Activated naive CD4-positive, alpha-beta T cell treated with anti-CD3 and anti-CD28 coated beads for 36 hours (primary cell): ENCODE measurements at regions of chr17 and their contacts with region 1.

Region 1: DNA sequence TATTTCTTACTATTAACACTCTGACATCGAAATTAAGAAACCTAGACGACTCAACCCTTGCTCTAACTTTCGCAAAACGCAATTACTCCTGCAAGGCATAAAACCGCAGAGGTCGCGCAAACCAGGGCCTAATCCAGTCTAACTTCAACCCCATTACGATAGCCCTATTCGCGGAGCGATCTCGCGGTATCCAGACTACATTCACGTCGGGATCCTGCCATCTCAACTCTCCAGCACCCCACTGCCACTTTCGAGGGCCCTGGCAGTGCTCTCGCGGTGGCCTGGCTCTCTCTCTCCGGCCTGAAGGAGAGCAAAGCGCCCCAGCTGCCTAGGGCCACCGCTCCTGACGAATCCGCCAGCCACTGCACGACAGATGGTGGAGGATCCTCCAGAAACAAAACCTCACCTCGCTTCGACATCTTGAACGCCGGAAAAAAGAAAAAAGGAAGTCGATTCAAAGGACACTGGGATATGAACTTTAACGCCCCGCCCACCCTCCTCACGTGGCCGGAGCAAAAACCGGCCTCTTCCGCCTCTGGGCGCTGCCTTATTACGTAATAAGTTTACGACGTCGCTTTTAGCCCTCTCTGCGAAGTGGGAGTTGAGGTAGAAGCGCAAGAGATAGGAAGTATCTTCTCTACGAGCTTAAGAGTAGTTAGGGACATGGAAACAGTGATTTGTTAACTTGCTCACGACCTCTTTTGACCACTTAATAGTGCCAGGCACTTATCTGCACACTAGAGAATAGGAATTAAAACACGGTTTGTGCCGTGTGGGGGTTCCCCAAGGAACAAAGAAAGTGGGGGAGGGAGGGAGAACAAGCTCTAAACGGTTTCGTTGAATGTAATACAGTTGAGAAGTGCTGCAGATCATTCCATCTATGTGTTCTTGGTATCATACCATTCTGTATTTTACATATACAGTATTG is at the start of gene RPL23:
- DNase-seq: peak; percentile 95
- H3K4me3 Mint-ChIP-seq: peak within 1 kb of the TSS; percentile 96
- H3K27ac Mint-ChIP-seq: peak within 1 kb of the TSS; percentile 99
- H3K4me1 Mint-ChIP-seq: peaks cover 43% of the 10 kb centered on the region
- H3K27me3 Mint-ChIP-seq: no peaks in the 10 kb centered on the region
- total RNA-seq, gene RPL23: 2,241 to 2,332 TPM

Region 2: GRCh38 chr17:38799378-38800236 is 53.9 kb before region 1 on chr17 and contains the start of gene PIP4K2B:
- CTCF ChIA-PET with region 1: no interaction called
- intact Hi-C with region 1: loop called (anchors 2 kb)
- DNase-seq: peak; percentile 91
- H3K4me3 Mint-ChIP-seq: peak within 1 kb of the TSS; percentile 95
- H3K27ac Mint-ChIP-seq: peak within 1 kb of the TSS; percentile 89
- H3K4me1 Mint-ChIP-seq: peaks cover 34% of the 10 kb centered on the region
- H3K27me3 Mint-ChIP-seq: no peaks in the 10 kb centered on the region
- total RNA-seq, gene PIP4K2B: 30.1 to 33.4 TPM

Region 3: GRCh38 chr17:38824899-38825761 is 28.4 kb before region 1 on chr17 and contains the start of gene CWC25:
- CTCF ChIA-PET with region 1: no interaction called
- intact Hi-C with region 1: loop called (anchors 1 kb)
- DNase-seq: peak; percentile 95
- H3K4me3 Mint-ChIP-seq: peak within 1 kb of the TSS; percentile 91
- H3K27ac Mint-ChIP-seq: peak within 1 kb of the TSS; percentile 99
- H3K4me1 Mint-ChIP-seq: peaks cover 29% of the 10 kb centered on the region
- H3K27me3 Mint-ChIP-seq: no peaks in the 10 kb centered on the region
- total RNA-seq, gene CWC25: 18.6 to 21.9 TPM

Region 4: GRCh38 chr17:39174907-39175694 is 321.5 kb after region 1 on chr17:
- CTCF ChIA-PET with region 1: no interaction called
- intact Hi-C with region 1: no loop called
- DNase-seq: peak; percentile 85
- H3K4me3 Mint-ChIP-seq: no peak overlapping the region
- H3K27ac Mint-ChIP-seq: no peak overlapping the region
- H3K4me1 Mint-ChIP-seq: peaks cover 4% of the 10 kb centered on the region
- H3K27me3 Mint-ChIP-seq: no peaks in the 10 kb centered on the region